ENCODE measurements at regions of chr12 and their contacts with region 1.

Region 1: GRCh38 chr12:17132336-17132735 is 526.4 kb upstream of the LMO3 start:
- DNase-seq: no peak
- ATAC-seq: no peak

Region 2: DNA sequence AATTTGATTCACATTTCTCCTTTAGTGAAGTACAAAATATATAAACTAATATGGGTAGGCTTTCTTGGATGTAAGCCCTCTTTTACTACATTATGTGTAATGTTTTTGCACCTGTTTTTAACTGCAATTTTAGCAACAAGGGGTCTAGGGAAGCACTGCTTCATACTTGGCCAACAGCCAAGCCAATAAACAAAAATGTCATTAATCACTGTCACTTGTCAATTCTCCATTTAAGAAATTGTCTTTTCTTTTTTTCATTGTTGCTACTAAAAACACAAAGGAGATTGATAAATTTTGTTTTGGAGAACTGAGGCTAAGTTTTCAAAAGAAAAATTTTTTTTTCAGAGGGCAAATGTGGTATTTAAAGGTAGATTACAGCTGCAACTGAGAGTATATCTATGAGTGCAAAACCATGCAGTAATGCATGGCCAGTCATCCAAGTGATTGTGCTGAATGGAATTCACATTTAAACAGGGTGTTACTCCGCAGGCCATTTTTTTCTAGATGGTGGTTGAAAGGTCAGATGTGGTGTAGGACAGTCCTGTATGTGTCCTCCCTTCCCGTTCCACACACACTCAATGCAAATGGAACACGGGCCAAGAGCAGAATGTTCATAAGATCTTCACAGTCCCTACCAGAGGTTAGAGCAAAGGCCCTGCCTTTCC is 23.3 kb before region 1 on chr12:
- intact Hi-C with region 1: loop called in 1 of 2 experiments (anchors 2 kb)
- DNase-seq: no peak
- ATAC-seq: no peak